Endothelial cell of umbilical vein (primary cell): ENCODE measurements at regions of chr10 and their contacts with region 1.

Region 1: GRCh38 chr10:69217119-69217754 is 2.9 kb upstream of the HKDC1 start:
- DNase-seq: peak; percentile 74
- H3K4me3 ChIP-seq: no peak overlapping the region
- H3K27ac ChIP-seq: peak overlapping the region; percentile 33
- H3K4me1 ChIP-seq: peaks cover 21% of the 10 kb centered on the region
- H3K27me3 ChIP-seq: peaks cover 0 to 2% of the 10 kb centered on the region in 2 experiments
- CTCF ChIP-seq: no peak
- POLR2A ChIP-seq: no peak

Region 2: GRCh38 chr10:69087590-69088470 is 129.4 kb before region 1 on chr10 and contains the start of gene SRGN:
- CTCF ChIA-PET with region 1: no interaction called
- POLR2A ChIA-PET with region 1: no interaction called
- dilution Hi-C with region 1: no loop called
- intact Hi-C with region 1: loop called (anchors 2 kb)
- DNase-seq: peak; percentile 92
- H3K4me3 ChIP-seq: peak within 1 kb of the TSS; percentile 74 to 95 (median 88)
- H3K27ac ChIP-seq: peak within 1 kb of the TSS; percentile 96
- H3K4me1 ChIP-seq: peaks cover 46% of the 10 kb centered on the region
- H3K27me3 ChIP-seq: no peaks in the 10 kb centered on the region
- CTCF ChIP-seq: no peak
- POLR2A ChIP-seq: peak; percentile 93
- total RNA-seq, gene SRGN: 433 and 450 TPM in 2 replicates

Region 3: GRCh38 chr10:69179743-69180524 is 37.3 kb before region 1 on chr10 and contains the start of gene SUPV3L1:
- CTCF ChIA-PET with region 1: no interaction called
- POLR2A ChIA-PET with region 1: no interaction called
- dilution Hi-C with region 1: no loop called
- intact Hi-C with region 1: loop called (anchors 2 kb)
- DNase-seq: peak; percentile 97
- H3K4me3 ChIP-seq: peak within 1 kb of the TSS; percentile 61 to 96 (median 64)
- H3K27ac ChIP-seq: peak within 1 kb of the TSS; percentile 94
- H3K4me1 ChIP-seq: peaks cover 17% of the 10 kb centered on the region
- H3K27me3 ChIP-seq: no peaks in the 10 kb centered on the region
- CTCF ChIP-seq: no peak
- POLR2A ChIP-seq: peak; percentile 76
- total RNA-seq, gene SUPV3L1: 30.0 and 30.4 TPM in 2 replicates